ENCODE measurements at regions of chr17 and their contacts with region 1.

Region 1: GRCh38 chr17:72985881-72986720 is 106.4 kb downstream of the SLC39A11 start:
- DNase-seq: peak; percentile 17 to 63 (median 39)
- ATAC-seq: no peak
- H3K4me3 ChIP-seq: no peak overlapping the region
- H3K4me3 Mint-ChIP-seq: no peak overlapping the region
- H3K27ac ChIP-seq: no peak overlapping the region
- H3K27ac Mint-ChIP-seq: no peak overlapping the region
- H3K4me1 ChIP-seq: no peaks in the 10 kb centered on the region
- H3K4me1 Mint-ChIP-seq: peaks cover 2% of the 10 kb centered on the region
- H3K27me3 ChIP-seq: no peaks in the 10 kb centered on the region
- H3K27me3 Mint-ChIP-seq: no peaks in the 10 kb centered on the region
- CTCF ChIP-seq: peak; percentile 66

Region 2: GRCh38 chr17:73030501-73030921 is 44.4 kb after region 1 on chr17:
- CTCF ChIA-PET with region 1: no interaction called
- POLR2A ChIA-PET with region 1: no interaction called
- intact Hi-C with region 1: no loop called
- DNase-seq: no peak
- ATAC-seq: no peak
- H3K4me3 ChIP-seq: no peak overlapping the region
- H3K4me3 Mint-ChIP-seq: no peak overlapping the region
- H3K27ac ChIP-seq: no peak overlapping the region
- H3K27ac Mint-ChIP-seq: no peak overlapping the region
- H3K4me1 ChIP-seq: no peaks in the 10 kb centered on the region
- H3K4me1 Mint-ChIP-seq: no peaks in the 10 kb centered on the region
- H3K27me3 ChIP-seq: no peaks in the 10 kb centered on the region
- H3K27me3 Mint-ChIP-seq: no peaks in the 10 kb centered on the region
- CTCF ChIP-seq: no peak

Region 3: DNA sequence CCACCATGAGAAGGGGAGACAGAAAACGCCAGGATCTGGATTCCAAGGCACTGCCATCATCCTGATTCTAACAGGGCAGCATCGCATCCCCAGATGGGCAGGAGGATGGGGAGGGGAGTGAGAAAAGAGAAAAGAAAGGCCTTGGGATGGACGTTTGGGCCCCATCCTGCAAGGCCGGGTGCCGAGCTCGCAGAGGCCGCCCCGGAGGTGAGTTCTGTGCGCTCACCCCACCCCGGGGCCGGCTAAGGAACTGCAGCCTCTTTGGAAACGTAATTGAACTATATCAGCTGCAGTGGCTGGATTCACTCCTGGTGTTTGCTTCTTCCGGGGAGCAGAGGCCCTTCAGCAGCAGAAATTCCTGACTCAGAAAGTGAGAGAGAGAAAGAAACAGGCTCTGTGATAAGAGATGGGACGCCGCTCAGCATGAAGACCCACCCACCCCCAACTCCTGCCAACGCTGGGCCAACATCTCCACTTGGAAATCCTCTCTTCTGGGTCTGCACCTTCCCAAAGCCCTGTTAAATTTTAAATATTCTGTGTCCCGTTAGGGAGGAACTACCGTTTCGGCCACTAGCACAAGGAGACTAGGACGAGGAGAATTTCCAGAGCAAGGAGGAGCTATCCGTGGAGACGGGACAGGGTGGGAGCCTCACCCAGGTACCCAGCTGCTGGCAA is 170.2 kb after region 1 on chr17:
- CTCF ChIA-PET with region 1: interaction called, 10 read pairs
- POLR2A ChIA-PET with region 1: no interaction called
- intact Hi-C with region 1: loop called in 1 of 2 experiments (anchors 2 kb)
- DNase-seq: peak; percentile 19 to 70 (median 53)
- ATAC-seq: peak; percentile 78
- H3K4me3 ChIP-seq: no peak overlapping the region
- H3K4me3 Mint-ChIP-seq: no peak overlapping the region
- H3K27ac ChIP-seq: no peak overlapping the region
- H3K27ac Mint-ChIP-seq: no peak overlapping the region
- H3K4me1 ChIP-seq: no peaks in the 10 kb centered on the region
- H3K4me1 Mint-ChIP-seq: peaks cover 3% of the 10 kb centered on the region
- H3K27me3 ChIP-seq: peaks cover 0 to 4% of the 10 kb centered on the region in 2 experiments
- H3K27me3 Mint-ChIP-seq: peaks cover 29% of the 10 kb centered on the region
- CTCF ChIP-seq: peak; percentile 62

Measured in CD8-positive, alpha-beta T cell (primary cell).